Common myeloid progenitor, CD34-positive (primary cell): ENCODE measurements at regions of chr2 and their contacts with region 1.

Region 1: GRCh38 chr2:85813982-85814801 is 60.4 kb downstream of the ATOH8 start:
- DNase-seq: peak; percentile 81 to 92 (median 85)
- H3K4me3 ChIP-seq: no peak overlapping the region
- H3K27ac ChIP-seq: no peak overlapping the region
- H3K4me1 ChIP-seq: no peaks in the 10 kb centered on the region
- H3K27me3 ChIP-seq: peaks cover 0 to 9% (median 0%) of the 10 kb centered on the region in 5 experiments

Region 2: DNA sequence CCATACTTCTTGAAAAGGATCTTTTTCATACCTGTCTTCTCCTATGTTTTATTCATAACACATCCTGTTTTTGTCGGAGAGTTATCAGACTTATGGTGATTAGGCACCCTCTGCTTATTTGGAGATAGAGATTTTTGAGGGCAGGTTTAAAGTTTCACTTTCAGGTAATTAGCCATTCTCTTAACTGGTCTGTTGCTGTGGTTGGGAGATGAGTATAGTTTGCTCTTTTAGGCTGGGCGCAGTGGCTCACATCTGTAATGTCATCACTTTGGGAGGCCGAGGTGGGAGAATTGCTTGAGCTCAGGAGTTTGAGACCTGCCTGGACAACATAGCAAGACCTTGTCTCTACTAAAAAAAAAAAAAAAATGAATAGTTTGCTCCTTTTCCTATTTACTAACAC is 171.5 kb before region 1 on chr2:
- CTCF ChIA-PET with region 1: interaction called, 12 read pairs
- POLR2A ChIA-PET with region 1: no interaction called
- DNase-seq: no peak
- H3K4me3 ChIP-seq: no peak overlapping the region
- H3K27ac ChIP-seq: no peak overlapping the region
- H3K4me1 ChIP-seq: no peaks in the 10 kb centered on the region
- H3K27me3 ChIP-seq: no peaks in the 10 kb centered on the region

Region 3: GRCh38 chr2:85723707-85724360 is 90.4 kb before region 1 on chr2:
- CTCF ChIA-PET with region 1: interaction called, 83 read pairs
- POLR2A ChIA-PET with region 1: interaction called, 3 read pairs
- DNase-seq: no peak
- H3K4me3 ChIP-seq: no peak overlapping the region
- H3K27ac ChIP-seq: no peak overlapping the region
- H3K4me1 ChIP-seq: peaks cover 0 to 6% (median under 1%) of the 10 kb centered on the region in 4 experiments
- H3K27me3 ChIP-seq: peaks cover 0 to 5% (median 2%) of the 10 kb centered on the region in 5 experiments

Region 4: GRCh38 chr2:85741833-85742455 is 72.2 kb before region 1 on chr2:
- CTCF ChIA-PET with region 1: interaction called, 218 read pairs
- POLR2A ChIA-PET with region 1: no interaction called
- DNase-seq: peak in 2 of 3 donors; percentile 44 to 70
- H3K4me3 ChIP-seq: no peak overlapping the region
- H3K27ac ChIP-seq: no peak overlapping the region
- H3K4me1 ChIP-seq: peaks cover 0 to 11% (median 4%) of the 10 kb centered on the region in 4 experiments
- H3K27me3 ChIP-seq: peaks cover 0 to 20% (median 16%) of the 10 kb centered on the region in 5 experiments

Region 5: DNA sequence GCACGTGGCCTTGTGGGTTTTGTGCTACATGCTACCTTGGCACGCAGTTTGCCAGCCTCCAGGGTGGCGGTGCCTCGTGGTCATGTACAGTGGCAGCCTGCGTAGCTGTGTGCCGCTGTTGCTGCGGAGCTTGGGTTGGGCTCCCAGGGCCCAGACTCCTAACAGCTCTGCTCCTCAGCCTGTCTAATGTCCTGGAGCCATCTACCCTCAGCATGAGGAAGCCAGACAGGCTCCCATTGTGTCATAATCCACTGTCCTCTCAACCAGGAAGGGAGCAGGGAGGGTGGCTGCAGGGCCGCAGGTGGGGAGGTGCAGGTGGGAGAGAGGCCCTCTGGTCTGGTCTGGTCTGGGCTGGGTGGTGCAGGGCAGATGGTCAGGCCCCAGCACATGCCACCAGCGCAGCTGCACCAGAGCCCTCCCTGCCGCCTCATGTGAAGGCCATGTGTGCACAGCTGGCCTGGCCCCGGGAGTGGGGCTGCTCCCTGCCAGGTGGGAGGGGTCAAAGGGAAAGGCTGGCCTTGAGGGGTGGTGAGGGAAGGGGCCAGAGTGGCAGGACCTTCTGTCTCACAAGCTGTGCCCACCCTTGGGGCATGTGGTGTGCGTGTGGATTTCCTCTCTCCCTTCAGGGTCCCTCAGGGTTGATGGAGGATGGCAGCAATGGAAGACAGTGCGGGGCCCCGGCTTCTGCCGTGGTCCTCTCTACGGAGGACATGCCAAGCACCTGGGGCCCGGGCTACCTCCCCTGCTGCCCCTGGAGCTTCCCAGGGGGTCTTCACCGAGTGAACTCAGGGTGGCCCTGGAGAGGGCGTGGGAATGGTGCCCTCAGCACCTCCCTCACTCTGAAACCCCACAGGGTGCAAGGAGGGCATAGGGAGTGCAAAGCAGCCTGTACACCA is 55.6 kb before region 1 on chr2:
- CTCF ChIA-PET with region 1: interaction called, 218 read pairs
- POLR2A ChIA-PET with region 1: no interaction called
- DNase-seq: no peak
- H3K4me3 ChIP-seq: no peak overlapping the region
- H3K27ac ChIP-seq: no peak overlapping the region
- H3K4me1 ChIP-seq: peaks cover 0 to 21% (median 19%) of the 10 kb centered on the region in 4 experiments
- H3K27me3 ChIP-seq: peaks cover 0 to 43% (median 30%) of the 10 kb centered on the region in 5 experiments

Region 6: GRCh38 chr2:85826990-85827878 is 13.0 kb after region 1 on chr2:
- CTCF ChIA-PET with region 1: interaction called, 37 read pairs
- POLR2A ChIA-PET with region 1: interaction called, 4 read pairs
- DNase-seq: peak; percentile 66 to 84 (median 79)
- H3K4me3 ChIP-seq: peak overlapping the region in 1 of 7 experiments; percentile 32
- H3K27ac ChIP-seq: no peak overlapping the region
- H3K4me1 ChIP-seq: peaks cover 0 to 6% (median 5%) of the 10 kb centered on the region in 4 experiments
- H3K27me3 ChIP-seq: no peaks in the 10 kb centered on the region